ENCODE measurements at regions of chr7 and their contacts with region 1.

Region 1: DNA sequence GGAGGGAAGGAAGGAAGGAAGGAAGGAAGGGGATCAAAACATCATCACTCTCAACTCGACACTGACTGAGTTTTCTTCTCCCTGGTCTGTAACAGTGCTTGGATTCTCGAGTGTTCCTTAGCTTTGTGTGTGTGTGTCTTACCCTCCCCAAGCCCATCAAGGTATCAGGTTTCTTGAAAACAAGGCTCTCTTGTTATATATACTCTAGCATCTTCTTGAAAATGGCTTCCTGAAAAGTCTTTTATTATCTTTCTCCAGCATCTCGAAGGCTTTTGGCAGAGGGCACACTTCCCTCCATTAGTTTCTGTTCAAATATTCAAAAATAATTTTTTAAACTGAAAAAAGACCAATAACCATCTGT is 13.4 kb downstream of the SERPINE1 start:
- DNase-seq: no peak
- H3K4me3 ChIP-seq: no peak overlapping the region
- H3K27ac ChIP-seq: no peak overlapping the region
- H3K4me1 ChIP-seq: no peaks in the 10 kb centered on the region
- H3K27me3 ChIP-seq: no peaks in the 10 kb centered on the region
- CTCF ChIP-seq: no peak
- POLR2A ChIP-seq: no peak

Region 2: DNA sequence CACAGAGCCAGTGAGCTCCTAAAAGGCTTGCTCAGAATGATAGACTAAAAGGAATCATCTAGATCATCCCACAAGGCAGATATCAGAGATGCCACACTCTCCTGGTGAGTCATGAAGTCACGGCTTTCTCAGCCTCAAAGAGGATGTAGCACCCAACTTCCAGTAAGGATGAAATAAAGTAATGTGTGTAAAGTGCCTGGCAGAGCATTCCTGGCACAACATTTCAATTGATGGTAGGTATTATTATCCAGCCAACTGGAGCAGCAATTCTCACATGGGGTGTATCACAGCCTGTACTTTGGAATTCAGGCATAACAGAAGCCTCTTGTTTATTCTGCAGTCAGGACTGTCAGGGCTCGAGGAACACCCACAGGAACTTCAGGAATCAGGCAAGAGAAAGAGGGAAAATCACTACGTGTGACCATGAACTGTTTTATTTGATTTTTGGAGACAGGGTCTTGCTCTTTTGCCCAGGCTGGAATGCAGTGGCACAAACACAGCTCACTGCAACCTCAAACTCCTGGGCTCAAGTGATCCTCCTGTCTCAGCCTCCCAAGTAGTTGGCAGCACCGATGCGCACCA is 45.0 kb after region 1 on chr7:
- intact Hi-C with region 1: loop called (anchors 5 kb)
- DNase-seq: no peak
- H3K4me3 ChIP-seq: no peak overlapping the region
- H3K27ac ChIP-seq: no peak overlapping the region
- H3K4me1 ChIP-seq: no peaks in the 10 kb centered on the region
- H3K27me3 ChIP-seq: peaks cover under 1 to 15% of the 10 kb centered on the region in 2 donors
- CTCF ChIP-seq: no peak
- POLR2A ChIP-seq: no peak

Region 3: DNA sequence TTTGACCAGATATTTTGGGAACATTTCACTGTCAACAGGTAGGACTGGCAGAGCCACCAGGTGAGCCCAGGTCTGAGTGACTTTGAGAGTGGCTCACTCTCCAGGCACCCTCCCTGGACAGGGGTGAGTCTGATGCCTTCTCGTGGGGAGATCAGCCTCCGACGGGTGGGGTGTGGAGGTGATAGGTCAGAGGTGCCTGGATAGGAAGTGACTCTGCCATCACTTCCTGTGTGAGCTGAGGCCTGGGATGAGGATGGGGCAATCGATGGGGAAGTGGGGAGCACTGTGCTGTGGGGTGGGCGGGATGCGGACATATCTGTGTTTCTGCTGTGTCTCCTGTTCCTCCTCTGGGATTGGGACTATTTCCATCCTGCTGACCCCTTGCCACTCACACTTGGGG is 146.7 kb after region 1 on chr7:
- intact Hi-C with region 1: loop called (anchors 10 kb)
- DNase-seq: no peak
- H3K4me3 ChIP-seq: no peak overlapping the region
- H3K27ac ChIP-seq: no peak overlapping the region
- H3K4me1 ChIP-seq: no peaks in the 10 kb centered on the region
- H3K27me3 ChIP-seq: peaks cover 0 to 10% of the 10 kb centered on the region in 2 donors
- CTCF ChIP-seq: no peak
- POLR2A ChIP-seq: no peak

Region 4: GRCh38 chr7:101941481-101942383 is 801.4 kb after region 1 on chr7:
- intact Hi-C with region 1: no loop called
- DNase-seq: no peak
- H3K4me3 ChIP-seq: no peak overlapping the region
- H3K27ac ChIP-seq: no peak overlapping the region
- H3K4me1 ChIP-seq: no peaks in the 10 kb centered on the region
- H3K27me3 ChIP-seq: no peaks in the 10 kb centered on the region
- CTCF ChIP-seq: no peak
- POLR2A ChIP-seq: no peak

Measured in breast epithelium (tissue), 4 donors.